A549 (cell line): ENCODE measurements at regions of chr17 and their contacts with region 1.

Region 1: GRCh38 chr17:16477255-16477654 is 14.7 kb downstream of the LRRC75A start:
- DNase-seq: peak; percentile 69 to 88
- ATAC-seq: peak; percentile 83 to 92
- H3K4me3 ChIP-seq: no peak overlapping the region
- H3K27ac ChIP-seq: peak overlapping the region; percentile 69 to 89
- H3K4me1 ChIP-seq: peaks cover 12% of the 10 kb centered on the region
- CTCF ChIP-seq: no peak
- EP300 ChIP-seq: no peak
- POLR2A ChIP-seq: no peak
- RAD21 ChIP-seq: no peak

Region 2: DNA sequence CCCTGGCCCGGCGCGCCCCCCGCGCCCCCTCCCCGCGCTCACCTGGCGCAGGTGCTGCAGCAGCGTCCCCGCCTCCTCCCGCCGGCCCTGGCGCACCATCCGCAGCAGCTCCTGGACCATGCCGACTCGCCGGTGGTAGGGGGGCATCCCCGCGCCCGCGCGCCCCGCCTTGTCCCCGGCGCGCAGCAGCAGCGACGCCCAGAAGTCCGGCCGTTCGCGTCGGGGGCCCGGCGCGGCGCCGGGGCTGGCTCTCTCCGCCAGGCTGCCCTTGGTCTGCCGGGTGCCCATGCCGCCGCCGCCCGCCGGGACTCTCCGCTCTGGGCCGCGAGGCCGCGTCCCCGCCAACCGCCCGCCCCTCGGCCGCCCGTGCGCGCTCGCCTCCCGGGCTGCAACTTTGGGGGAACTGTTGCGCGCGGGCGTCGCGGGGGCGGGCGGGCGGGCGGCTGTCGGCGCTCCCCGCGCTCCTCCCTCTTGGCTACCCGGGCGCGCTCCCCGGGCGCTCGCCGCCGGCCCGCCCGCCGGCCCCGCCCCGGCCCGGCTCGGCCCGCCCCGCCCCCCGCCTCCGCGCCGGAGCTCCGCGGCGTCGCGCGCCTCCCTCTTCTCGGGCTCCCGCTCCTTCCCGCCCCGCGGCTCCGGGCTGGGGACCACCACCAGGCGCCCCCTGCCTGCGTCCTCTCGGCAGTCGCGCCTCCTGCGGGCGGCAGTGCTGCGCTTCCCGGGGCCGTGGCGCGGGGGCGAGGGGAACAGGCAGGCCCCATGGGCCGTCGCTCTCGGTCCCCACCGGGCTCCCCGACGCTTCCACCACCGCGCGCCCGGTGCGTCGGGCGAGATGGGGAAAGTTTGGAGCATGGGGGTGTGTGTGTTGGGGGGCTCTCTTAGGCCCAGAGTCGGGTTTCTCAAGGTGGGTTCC is 14.7 kb after region 1 on chr17 and contains the start of gene LRRC75A:
- CTCF ChIA-PET with region 1: interaction called, 8 read pairs
- POLR2A ChIA-PET with region 1: interaction called, 10 read pairs
- DNase-seq: peak in 1 of 2 experiments; percentile 53
- ATAC-seq: peak; percentile 73 to 82
- H3K4me3 ChIP-seq: peak within 1 kb of the TSS; percentile 94
- H3K27ac ChIP-seq: peak within 1 kb of the TSS; percentile 77 to 85
- H3K4me1 ChIP-seq: peaks cover 5% of the 10 kb centered on the region; the same call in 2 of the 3 replicates
- CTCF ChIP-seq: no peak
- EP300 ChIP-seq: no peak
- POLR2A ChIP-seq: peak; percentile 17; the same call in 1 of the 2 replicates
- RAD21 ChIP-seq: no peak
- polyA plus RNA-seq, gene LRRC75A: 0.65 and 0.78 TPM in 2 replicates

Region 3: GRCh38 chr17:16573466-16573865 is 96.2 kb after region 1 on chr17:
- CTCF ChIA-PET with region 1: no interaction called
- POLR2A ChIA-PET with region 1: no interaction called
- DNase-seq: no peak
- ATAC-seq: no peak
- H3K4me3 ChIP-seq: no peak overlapping the region
- H3K27ac ChIP-seq: no peak overlapping the region
- H3K4me1 ChIP-seq: no peaks in the 10 kb centered on the region
- CTCF ChIP-seq: no peak
- EP300 ChIP-seq: no peak
- POLR2A ChIP-seq: no peak
- RAD21 ChIP-seq: no peak